Psoas muscle (tissue), 8 donors: ENCODE measurements at regions of chr15 and their contacts with region 1.

Region 1: GRCh38 chr15:76330080-76330680 is 6.4 kb upstream of the ISL2 start:
- DNase-seq: peak in 1 of 2 donors; percentile 81
- ATAC-seq: peak; percentile 69 to 86 (median 74)
- H3K4me3 ChIP-seq: no peak overlapping the region
- H3K27ac ChIP-seq: no peak overlapping the region
- H3K4me1 ChIP-seq: peaks cover 2% of the 10 kb centered on the region
- H3K27me3 ChIP-seq: peaks cover 0 to 26% (median 16%) of the 10 kb centered on the region in 3 donors
- CTCF ChIP-seq: peak; percentile 55

Region 2: DNA sequence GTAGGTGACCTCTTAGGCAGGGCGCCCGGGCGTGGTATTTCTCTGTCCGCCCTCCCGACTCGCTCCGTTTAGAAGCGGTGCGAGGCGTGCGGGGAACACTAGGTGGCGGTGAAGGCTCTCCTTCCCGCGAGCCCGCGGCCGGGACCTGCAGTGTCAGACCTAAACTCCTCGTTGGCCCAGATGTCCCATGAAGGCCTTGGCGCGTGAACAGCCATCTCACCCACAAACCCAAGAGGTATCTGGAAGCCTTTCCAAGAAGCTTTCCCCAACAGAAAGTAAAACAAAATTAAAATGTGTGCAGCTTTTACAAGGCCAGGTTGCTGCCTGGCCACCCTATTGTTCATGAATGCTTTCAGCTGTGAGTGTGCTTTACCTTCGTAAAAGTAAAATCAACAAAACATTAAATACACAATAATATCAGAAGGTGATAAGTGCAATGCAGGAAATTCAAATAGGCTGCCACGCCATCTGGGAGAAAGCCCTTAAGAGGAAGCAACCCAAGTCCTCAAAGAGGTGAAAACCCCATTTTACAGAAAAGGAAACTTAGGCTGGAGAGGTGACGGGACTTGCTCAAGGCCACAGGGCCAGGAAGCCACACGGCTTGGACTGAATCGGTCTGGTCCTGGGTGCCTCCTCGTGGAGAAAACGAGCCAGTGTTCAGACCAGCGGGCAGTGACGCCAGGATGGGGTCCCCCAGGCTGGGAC is 139.2 kb before region 1 on chr15:
- intact Hi-C with region 1: loop called (anchors 2 to 5 kb)
- DNase-seq: peak; percentile 84 to 91
- ATAC-seq: peak; percentile 86 to 89 (median 88)
- H3K4me3 ChIP-seq: no peak overlapping the region
- H3K27ac ChIP-seq: no peak overlapping the region
- H3K4me1 ChIP-seq: peaks cover 42% of the 10 kb centered on the region
- H3K27me3 ChIP-seq: no peaks in the 10 kb centered on the region
- CTCF ChIP-seq: peak; percentile 79

Region 3: DNA sequence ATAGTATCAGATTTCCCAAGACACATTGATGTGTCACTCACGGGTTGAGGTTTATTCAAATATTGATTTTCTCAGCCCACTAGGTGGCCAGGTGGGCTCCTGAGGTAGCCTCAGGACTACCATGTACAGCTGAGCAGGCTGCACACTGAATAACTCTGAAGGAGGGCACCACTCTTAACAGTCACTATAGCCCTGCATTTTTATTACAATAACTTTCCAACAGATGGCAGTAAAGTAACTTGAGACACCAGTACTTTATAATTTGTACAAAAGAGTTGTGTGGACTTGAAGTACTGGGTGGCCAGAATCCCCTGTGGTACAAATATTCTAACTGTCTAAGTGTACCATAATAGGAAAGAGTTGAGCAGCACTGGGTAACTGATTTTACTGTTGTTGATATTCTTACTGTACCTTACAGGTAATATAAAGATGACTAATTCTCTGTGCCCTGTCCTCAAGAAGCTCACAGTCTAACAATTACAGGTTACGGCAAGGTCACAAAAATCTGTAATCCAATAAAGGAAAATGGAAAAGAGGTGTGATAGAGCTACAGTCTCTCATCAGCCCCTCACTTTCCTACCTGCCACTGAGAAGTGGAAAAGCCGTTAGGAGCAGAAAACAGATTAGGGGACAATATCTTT is 94.9 kb before region 1 on chr15:
- intact Hi-C with region 1: loop called in 1 of 2 experiments (anchors 2 kb)
- DNase-seq: no peak
- ATAC-seq: peak; percentile 39 to 86 (median 83)
- H3K4me3 ChIP-seq: no peak overlapping the region
- H3K27ac ChIP-seq: no peak overlapping the region
- H3K4me1 ChIP-seq: peaks cover 5% of the 10 kb centered on the region
- H3K27me3 ChIP-seq: no peaks in the 10 kb centered on the region
- CTCF ChIP-seq: peak; percentile 58